ENCODE measurements at regions of chr1 and their contacts with region 1.

Region 1: DNA sequence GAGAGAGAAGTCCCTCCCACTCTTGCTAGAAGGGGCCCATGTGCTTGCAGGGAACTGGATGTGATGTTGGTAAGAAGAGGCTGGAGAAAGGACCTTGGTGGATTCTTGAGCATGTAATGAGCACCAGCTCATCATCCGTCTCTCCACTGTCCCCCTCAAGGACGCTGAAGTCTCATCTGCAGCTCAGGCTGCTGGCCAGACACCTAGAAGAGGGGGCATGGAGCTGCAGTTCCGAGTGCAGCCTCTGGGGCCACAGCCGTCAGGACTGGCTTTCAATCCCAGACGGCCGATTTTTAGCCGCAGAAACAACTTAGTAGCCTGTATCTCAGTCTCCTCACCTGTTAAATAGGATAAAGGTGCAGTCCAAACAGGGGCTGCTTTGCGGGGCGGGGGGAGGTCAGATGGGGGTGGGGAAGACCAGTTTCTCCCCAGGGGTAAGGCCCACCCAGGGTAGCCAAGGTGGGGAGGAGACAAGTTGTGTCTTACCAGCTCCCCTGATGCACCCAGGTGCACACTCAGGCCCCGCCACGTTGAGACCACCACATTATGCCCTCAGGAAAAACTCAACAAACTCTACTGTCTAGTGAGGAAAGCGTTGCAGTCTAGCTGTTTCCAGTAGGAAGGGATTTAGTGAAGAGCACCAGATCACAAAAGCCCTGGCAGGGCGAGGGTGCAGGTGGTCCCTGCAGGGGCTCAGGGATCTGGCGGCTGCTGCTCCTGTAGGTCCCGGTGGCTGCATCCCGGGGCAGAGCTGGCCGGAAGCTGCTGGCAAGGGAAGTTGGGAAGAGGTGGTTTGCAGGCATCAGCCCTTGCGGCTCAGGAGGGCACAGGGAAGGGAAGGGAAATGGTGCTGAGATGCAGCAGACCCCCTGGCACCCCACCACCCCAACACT is 29.5 kb downstream of the LDLRAP1 start:
- DNase-seq: peak; percentile 39 to 86
- H3K4me3 ChIP-seq: no peak overlapping the region
- H3K27ac ChIP-seq: no peak overlapping the region
- H3K4me1 ChIP-seq: peaks cover 0 to 35% (median 21%) of the 10 kb centered on the region in 4 experiments; a peak in 6 of 7 replicates
- H3K27me3 ChIP-seq: no peaks in the 10 kb centered on the region
- CTCF ChIP-seq: peak in 2 of 3 experiments; percentile 62 to 82; a peak in 3 of 4 replicates
- EP300 ChIP-seq: no peak
- POLR2A ChIP-seq: no peak
- RAD21 ChIP-seq: peak; percentile 35 to 58; a peak in 3 of 4 replicates

Region 2: DNA sequence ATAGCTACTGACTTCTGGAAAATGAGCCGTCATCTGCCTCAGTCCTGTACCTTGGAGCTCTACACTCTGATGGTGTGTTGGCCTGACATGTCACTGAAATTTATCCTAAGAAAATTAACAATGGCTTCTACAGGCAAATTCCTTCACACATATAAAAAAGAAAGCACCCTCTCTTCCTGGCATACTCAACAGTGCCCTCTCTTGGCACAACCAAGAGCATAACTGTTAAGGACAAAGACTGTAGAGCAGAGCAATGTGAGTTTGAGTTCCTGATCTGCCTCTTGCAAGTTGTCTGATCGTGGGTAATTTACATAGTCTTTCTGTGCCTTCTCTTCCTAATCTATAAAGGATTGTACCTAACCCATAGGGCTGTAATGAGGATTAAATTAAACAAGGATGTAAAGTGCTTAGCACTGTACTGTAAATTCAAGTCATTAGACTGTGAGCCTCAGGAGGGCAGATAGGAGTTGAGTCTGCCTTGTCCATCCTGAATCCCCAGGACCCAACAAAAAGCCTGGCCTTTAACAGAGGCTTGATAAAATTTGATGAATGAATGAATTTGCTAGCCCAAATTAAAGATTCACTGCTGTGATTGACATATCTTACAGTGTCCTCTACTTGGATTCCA is 424.2 kb before region 1 on chr1:
- CTCF ChIA-PET with region 1: no interaction called
- POLR2A ChIA-PET with region 1: no interaction called
- DNase-seq: peak in 1 of 2 experiments; percentile 49
- H3K4me3 ChIP-seq: no peak overlapping the region
- H3K27ac ChIP-seq: no peak overlapping the region
- H3K4me1 ChIP-seq: peaks cover 0 to 3% (median 0%) of the 10 kb centered on the region in 4 experiments; a peak in 1 of 7 replicates
- H3K27me3 ChIP-seq: no peaks in the 10 kb centered on the region; a peak in 1 of 7 replicates
- CTCF ChIP-seq: peak in 2 of 3 experiments; percentile 63 to 74; a peak in 3 of 4 replicates
- EP300 ChIP-seq: no peak
- POLR2A ChIP-seq: no peak
- RAD21 ChIP-seq: peak; percentile 37 to 66

Region 3: GRCh38 chr1:25484096-25484495 is 88.9 kb before region 1 on chr1:
- CTCF ChIA-PET with region 1: no interaction called
- POLR2A ChIA-PET with region 1: no interaction called
- DNase-seq: no peak
- H3K4me3 ChIP-seq: no peak overlapping the region
- H3K27ac ChIP-seq: no peak overlapping the region
- H3K4me1 ChIP-seq: peaks cover 0 to 9% (median 6%) of the 10 kb centered on the region in 4 experiments; a peak in 4 of 7 replicates
- H3K27me3 ChIP-seq: no peaks in the 10 kb centered on the region
- CTCF ChIP-seq: no peak
- EP300 ChIP-seq: no peak
- POLR2A ChIP-seq: no peak
- RAD21 ChIP-seq: no peak

Region 4: GRCh38 chr1:25538191-25538761 is 34.7 kb before region 1 on chr1:
- CTCF ChIA-PET with region 1: interaction called, 15 read pairs
- POLR2A ChIA-PET with region 1: interaction called, 4 read pairs
- DNase-seq: no peak
- H3K4me3 ChIP-seq: no peak overlapping the region
- H3K27ac ChIP-seq: no peak overlapping the region
- H3K4me1 ChIP-seq: peaks cover 0 to 9% (median 4%) of the 10 kb centered on the region in 4 experiments; a peak in 5 of 7 replicates
- H3K27me3 ChIP-seq: no peaks in the 10 kb centered on the region
- CTCF ChIP-seq: no peak
- EP300 ChIP-seq: no peak
- POLR2A ChIP-seq: no peak
- RAD21 ChIP-seq: no peak

Region 5: GRCh38 chr1:25549273-25550154 is 23.4 kb before region 1 on chr1:
- CTCF ChIA-PET with region 1: interaction called, 72 read pairs
- POLR2A ChIA-PET with region 1: no interaction called
- DNase-seq: no peak
- H3K4me3 ChIP-seq: no peak overlapping the region
- H3K27ac ChIP-seq: no peak overlapping the region
- H3K4me1 ChIP-seq: peaks cover 0 to 4% (median 3%) of the 10 kb centered on the region in 4 experiments; a peak in 4 of 7 replicates
- H3K27me3 ChIP-seq: peaks cover 0 to 2% (median 2%) of the 10 kb centered on the region in 4 experiments; a peak in 5 of 7 replicates
- CTCF ChIP-seq: no peak
- EP300 ChIP-seq: no peak
- POLR2A ChIP-seq: no peak
- RAD21 ChIP-seq: no peak

Region 6: GRCh38 chr1:25590096-25590824 is 17.3 kb after region 1 on chr1:
- CTCF ChIA-PET with region 1: interaction called, 92 read pairs
- POLR2A ChIA-PET with region 1: interaction called, 3 read pairs
- DNase-seq: no peak
- H3K4me3 ChIP-seq: no peak overlapping the region
- H3K27ac ChIP-seq: no peak overlapping the region
- H3K4me1 ChIP-seq: peaks cover 0 to 16% (median 10%) of the 10 kb centered on the region in 4 experiments; a peak in 6 of 7 replicates
- H3K27me3 ChIP-seq: no peaks in the 10 kb centered on the region
- CTCF ChIP-seq: peak in 2 of 3 experiments; percentile 6 to 15; a peak in 1 of 4 replicates
- EP300 ChIP-seq: no peak
- POLR2A ChIP-seq: no peak
- RAD21 ChIP-seq: no peak; a peak in 1 of 4 replicates

Region 7: DNA sequence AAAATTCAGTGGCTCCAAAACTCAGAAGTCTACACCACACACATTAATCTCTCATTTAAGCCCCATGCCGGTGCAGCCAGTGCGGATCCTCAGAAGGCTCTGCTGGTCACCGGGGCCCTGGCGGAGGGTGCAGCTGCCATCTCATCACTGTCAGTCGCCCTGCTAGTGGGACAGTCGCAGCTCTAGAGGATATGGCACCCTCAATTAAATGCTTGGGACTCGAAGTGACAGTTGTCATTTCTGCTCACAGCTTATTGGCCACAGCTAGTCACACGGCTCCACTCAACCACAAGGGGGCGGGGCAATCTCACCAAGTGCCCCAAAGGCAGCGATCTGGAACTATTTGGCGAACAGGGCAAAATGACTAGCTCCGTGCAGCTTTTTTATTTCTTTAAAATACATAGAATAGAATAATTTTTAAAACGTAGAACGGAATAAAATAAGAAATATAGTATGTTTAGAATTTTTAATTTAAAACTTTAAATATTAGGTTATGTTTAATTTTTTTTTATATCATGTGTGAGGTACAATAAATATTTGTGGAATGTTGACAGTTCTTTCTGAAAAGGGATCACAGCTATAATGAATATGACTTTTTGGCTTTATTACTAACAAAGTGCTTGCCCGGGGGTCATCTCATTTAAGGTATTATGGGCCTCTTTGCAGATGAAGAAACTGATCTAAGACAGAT is 35.7 kb after region 1 on chr1:
- CTCF ChIA-PET with region 1: interaction called, 34 read pairs
- POLR2A ChIA-PET with region 1: interaction called, 3 read pairs
- DNase-seq: peak in 1 of 2 experiments; percentile 87
- H3K4me3 ChIP-seq: no peak overlapping the region
- H3K27ac ChIP-seq: no peak overlapping the region
- H3K4me1 ChIP-seq: no peaks in the 10 kb centered on the region
- H3K27me3 ChIP-seq: no peaks in the 10 kb centered on the region; a peak in 2 of 7 replicates
- CTCF ChIP-seq: peak; percentile 63 to 69 (median 65)
- EP300 ChIP-seq: no peak
- POLR2A ChIP-seq: no peak
- RAD21 ChIP-seq: peak; percentile 72 to 81

Region 8: DNA sequence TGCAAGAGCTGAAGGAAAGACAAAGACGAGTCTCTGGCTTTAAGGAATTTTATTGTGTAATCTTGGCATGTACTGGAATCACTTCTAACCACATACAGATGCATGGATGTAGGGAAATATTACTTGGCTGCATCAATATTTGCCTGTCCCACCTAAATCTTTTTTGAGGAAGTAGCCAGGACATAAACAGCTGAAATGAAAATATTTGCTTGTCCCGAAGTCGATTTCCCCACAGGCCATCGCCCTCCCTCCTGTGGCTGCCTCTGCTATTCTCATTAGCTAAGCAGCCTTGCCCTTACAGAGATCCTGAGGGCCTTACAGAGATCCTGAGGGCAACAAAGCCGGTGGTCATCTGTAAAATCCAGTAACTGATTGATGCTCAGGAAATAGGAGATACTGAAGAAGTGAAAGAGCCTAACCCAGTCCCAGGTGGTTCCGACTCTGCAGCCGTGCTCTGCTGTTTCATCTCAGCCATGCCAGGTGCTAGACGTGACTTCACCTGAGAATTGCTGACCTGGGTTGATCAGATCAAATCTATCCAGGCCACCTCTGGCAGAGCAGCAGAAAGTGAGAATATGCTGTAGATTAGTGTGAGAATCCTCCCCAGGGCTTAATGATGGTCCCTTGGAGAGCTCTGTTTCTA is 69.1 kb after region 1 on chr1:
- CTCF ChIA-PET with region 1: no interaction called
- POLR2A ChIA-PET with region 1: no interaction called
- DNase-seq: peak in 1 of 2 experiments; percentile 23
- H3K4me3 ChIP-seq: no peak overlapping the region
- H3K27ac ChIP-seq: no peak overlapping the region
- H3K4me1 ChIP-seq: peaks cover 0 to 4% (median under 1%) of the 10 kb centered on the region in 4 experiments; a peak in 2 of 7 replicates
- H3K27me3 ChIP-seq: no peaks in the 10 kb centered on the region; a peak in 2 of 7 replicates
- CTCF ChIP-seq: no peak
- EP300 ChIP-seq: no peak
- POLR2A ChIP-seq: no peak
- RAD21 ChIP-seq: no peak

Region 9: DNA sequence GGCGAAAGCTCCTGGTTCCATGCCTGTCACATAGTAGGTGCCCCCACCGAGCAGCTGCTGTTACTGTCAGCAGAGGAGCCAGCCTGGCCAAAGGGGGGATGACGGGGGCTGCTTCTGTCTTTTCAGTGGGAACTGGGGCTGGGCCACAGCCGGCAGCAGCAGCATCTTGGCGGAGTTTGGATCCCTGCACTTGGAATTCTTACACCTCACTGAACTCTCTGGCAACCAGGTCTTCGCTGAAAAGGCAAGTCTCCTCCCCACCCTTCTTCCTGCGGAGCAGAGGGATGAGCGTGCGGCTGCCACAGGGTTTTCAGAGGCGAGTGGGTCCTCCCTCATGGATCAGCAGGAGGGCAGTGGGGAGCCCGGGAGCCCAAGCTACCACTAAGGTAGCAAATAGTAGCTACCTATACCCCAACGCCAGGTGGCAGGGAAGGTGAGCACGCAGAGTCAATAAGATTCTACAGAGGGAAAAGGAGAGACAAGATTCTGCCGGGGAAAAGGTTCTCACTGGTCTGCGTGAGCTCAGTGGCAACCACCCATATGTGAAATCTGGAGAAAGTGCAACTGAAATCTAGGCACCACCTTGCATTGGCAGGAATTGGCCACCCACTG is 185.6 kb after region 1 on chr1:
- CTCF ChIA-PET with region 1: interaction called, 11 read pairs
- POLR2A ChIA-PET with region 1: no interaction called
- DNase-seq: no peak
- H3K4me3 ChIP-seq: no peak overlapping the region
- H3K27ac ChIP-seq: no peak overlapping the region
- H3K4me1 ChIP-seq: peaks cover 0 to 16% (median 7%) of the 10 kb centered on the region in 4 experiments; a peak in 5 of 7 replicates
- H3K27me3 ChIP-seq: no peaks in the 10 kb centered on the region
- CTCF ChIP-seq: peak in 1 of 3 experiments; percentile 24; a peak in 1 of 4 replicates
- EP300 ChIP-seq: no peak
- POLR2A ChIP-seq: no peak
- RAD21 ChIP-seq: no peak; a peak in 1 of 4 replicates

Region 10: GRCh38 chr1:25810341-25811299 is 237.7 kb after region 1 on chr1:
- CTCF ChIA-PET with region 1: interaction called, 14 read pairs
- POLR2A ChIA-PET with region 1: no interaction called
- DNase-seq: peak; percentile 59 to 100
- H3K4me3 ChIP-seq: no peak overlapping the region
- H3K27ac ChIP-seq: no peak overlapping the region
- H3K4me1 ChIP-seq: peaks cover 0 to 5% (median under 1%) of the 10 kb centered on the region in 4 experiments; a peak in 2 of 7 replicates
- H3K27me3 ChIP-seq: no peaks in the 10 kb centered on the region
- CTCF ChIP-seq: peak; percentile 98 to 100 (median 99)
- EP300 ChIP-seq: no peak
- POLR2A ChIP-seq: no peak
- RAD21 ChIP-seq: peak; percentile 99 to 100

Measured in H1 (cell line).